Astrocyte of the cerebellum (primary cell): ENCODE measurements at regions of chr11 and their contacts with region 1.

Region 1: DNA sequence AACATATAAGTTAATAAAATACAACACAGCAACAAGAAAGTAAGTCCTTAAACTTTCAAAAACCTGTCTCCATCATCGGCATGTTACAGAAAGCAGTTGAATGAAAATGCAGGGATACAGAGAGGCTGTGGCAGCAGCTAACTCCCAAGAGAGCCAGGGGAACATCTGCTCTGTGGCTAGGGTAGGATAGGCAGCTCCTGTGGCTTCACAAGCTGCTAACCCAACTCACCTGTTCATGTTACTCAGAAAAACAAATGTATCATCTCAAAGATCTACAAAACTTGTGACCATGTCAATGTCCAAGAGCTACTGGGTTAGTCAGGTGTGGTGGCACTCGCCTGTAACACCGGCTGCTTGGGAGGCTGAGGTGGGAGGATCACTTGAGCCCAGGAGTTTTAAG is 15.2 kb upstream of the PLAAT3 start:
- DNase-seq: no peak
- H3K4me3 ChIP-seq: no peak overlapping the region
- CTCF ChIP-seq: no peak

Region 2: GRCh38 chr11:63480039-63480438 is 149.4 kb before region 1 on chr11:
- in situ Hi-C with region 1: loop called (anchors 5 kb)
- DNase-seq: no peak
- H3K4me3 ChIP-seq: no peak overlapping the region
- CTCF ChIP-seq: no peak

Region 3: GRCh38 chr11:63826471-63827190 is 197.2 kb after region 1 on chr11:
- in situ Hi-C with region 1: no loop called
- DNase-seq: no peak
- H3K4me3 ChIP-seq: no peak overlapping the region
- CTCF ChIP-seq: no peak